A549 (cell line): ENCODE measurements at regions of chr20 and their contacts with region 1.

Region 1: GRCh38 chr20:62368976-62369814 is 2.1 kb upstream of the LAMA5 start:
- DNase-seq: peak in 1 of 2 experiments; percentile 89
- ATAC-seq: peak; percentile 48 to 68
- H3K4me3 ChIP-seq: peak overlapping the region; percentile 100
- H3K27ac ChIP-seq: peak overlapping the region; percentile 97 to 99
- H3K4me1 ChIP-seq: peaks cover 49% of the 10 kb centered on the region
- CTCF ChIP-seq: peak; percentile 29; the same call in 2 of the 3 replicates
- EP300 ChIP-seq: peak; percentile 35 to 44; a peak in 2 of 5 replicates
- POLR2A ChIP-seq: peak; percentile 60
- RAD21 ChIP-seq: peak in 1 of 2 experiments; percentile 2; a peak in 2 of 5 replicates

Region 2: GRCh38 chr20:62308102-62308822 is 60.9 kb before region 1 on chr20:
- CTCF ChIA-PET with region 1: interaction called, 42 read pairs
- POLR2A ChIA-PET with region 1: interaction called, 4 read pairs
- DNase-seq: peak in 1 of 2 experiments; percentile 51
- ATAC-seq: peak in 1 of 2 experiments; percentile 1; a peak in 2 of 6 replicates
- H3K4me3 ChIP-seq: no peak overlapping the region
- H3K27ac ChIP-seq: peak overlapping the region in 1 of 2 experiments; percentile 97; a peak in 3 of 6 replicates
- H3K4me1 ChIP-seq: peaks cover 66% of the 10 kb centered on the region
- CTCF ChIP-seq: no peak
- EP300 ChIP-seq: no peak
- POLR2A ChIP-seq: no peak
- RAD21 ChIP-seq: no peak

Region 3: GRCh38 chr20:62350093-62350628 is 19.0 kb before region 1 on chr20:
- CTCF ChIA-PET with region 1: interaction called, 107 read pairs
- POLR2A ChIA-PET with region 1: interaction called, 30 read pairs
- DNase-seq: peak; percentile 52 to 93
- ATAC-seq: peak; percentile 59 to 62
- H3K4me3 ChIP-seq: no peak overlapping the region
- H3K27ac ChIP-seq: peak overlapping the region; percentile 97 to 99
- H3K4me1 ChIP-seq: peaks cover 55% of the 10 kb centered on the region
- CTCF ChIP-seq: no peak
- EP300 ChIP-seq: peak; percentile 41 to 49; a peak in 1 of 5 replicates
- POLR2A ChIP-seq: no peak
- RAD21 ChIP-seq: peak; percentile 3 to 10; a peak in 1 of 5 replicates

Region 4: GRCh38 chr20:62357187-62357667 is 12.0 kb before region 1 on chr20:
- CTCF ChIA-PET with region 1: interaction called, 290 read pairs
- POLR2A ChIA-PET with region 1: interaction called, 61 read pairs
- DNase-seq: peak in 1 of 2 experiments; percentile 77
- ATAC-seq: peak in 1 of 2 experiments; percentile 7; a peak in 3 of 6 replicates
- H3K4me3 ChIP-seq: peak overlapping the region; percentile 41; the same call in 2 of the 3 replicates
- H3K27ac ChIP-seq: peak overlapping the region; percentile 97 to 99
- H3K4me1 ChIP-seq: peaks cover 98% of the 10 kb centered on the region
- CTCF ChIP-seq: no peak
- EP300 ChIP-seq: peak in 1 of 2 experiments; percentile 46; a peak in 1 of 5 replicates
- POLR2A ChIP-seq: 0 out of 2 replicates have a peak, but pooled peaks have one; percentile 20
- RAD21 ChIP-seq: peak in 1 of 2 experiments; percentile 12; a peak in 1 of 5 replicates